H1 (cell line): ENCODE measurements at regions of chr11 and their contacts with region 1.

Region 1: DNA sequence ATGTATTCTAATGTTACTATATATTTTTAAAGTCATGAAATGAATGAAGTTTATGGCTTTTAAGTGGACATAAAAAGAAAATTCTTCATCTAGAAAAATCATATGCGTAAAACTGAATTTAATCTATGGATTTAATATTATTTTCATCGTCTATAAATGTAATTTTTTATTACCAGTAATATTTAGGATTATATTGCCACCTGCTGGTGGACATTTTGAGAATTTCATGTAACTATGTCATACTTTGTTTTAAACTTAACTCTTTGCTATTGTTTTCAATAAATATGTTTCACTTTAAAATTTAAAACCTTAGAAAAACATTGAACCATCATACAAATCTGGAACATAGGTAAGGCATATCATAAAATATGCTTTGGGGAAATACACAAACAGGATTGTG is 66.5 kb upstream of the CEP126 start:
- DNase-seq: no peak
- H3K4me3 ChIP-seq: no peak overlapping the region
- H3K27ac ChIP-seq: no peak overlapping the region
- H3K4me1 ChIP-seq: no peaks in the 10 kb centered on the region
- H3K27me3 ChIP-seq: no peaks in the 10 kb centered on the region
- CTCF ChIP-seq: no peak
- EP300 ChIP-seq: no peak
- POLR2A ChIP-seq: no peak
- RAD21 ChIP-seq: peak in 1 of 2 experiments; percentile 30; a peak in 3 of 4 replicates

Region 2: GRCh38 chr11:101428918-101429317 is 419.3 kb before region 1 on chr11:
- CTCF ChIA-PET with region 1: interaction called, 15 read pairs
- POLR2A ChIA-PET with region 1: no interaction called
- DNase-seq: no peak
- H3K4me3 ChIP-seq: no peak overlapping the region
- H3K27ac ChIP-seq: no peak overlapping the region
- H3K4me1 ChIP-seq: peaks cover 0 to 7% (median 0%) of the 10 kb centered on the region in 4 experiments; a peak in 2 of 7 replicates
- H3K27me3 ChIP-seq: no peaks in the 10 kb centered on the region
- CTCF ChIP-seq: peak in 2 of 3 experiments; percentile 68 to 72; a peak in 3 of 4 replicates
- EP300 ChIP-seq: no peak
- POLR2A ChIP-seq: no peak
- RAD21 ChIP-seq: peak; percentile 92 to 93

Region 3: GRCh38 chr11:101436511-101437142 is 411.6 kb before region 1 on chr11:
- CTCF ChIA-PET with region 1: interaction called, 38 read pairs
- POLR2A ChIA-PET with region 1: no interaction called
- DNase-seq: peak in 1 of 2 experiments; percentile 74
- H3K4me3 ChIP-seq: no peak overlapping the region
- H3K27ac ChIP-seq: no peak overlapping the region
- H3K4me1 ChIP-seq: no peaks in the 10 kb centered on the region
- H3K27me3 ChIP-seq: no peaks in the 10 kb centered on the region
- CTCF ChIP-seq: peak; percentile 8 to 84 (median 75)
- EP300 ChIP-seq: no peak
- POLR2A ChIP-seq: no peak
- RAD21 ChIP-seq: peak; percentile 86 to 92

Region 4: DNA sequence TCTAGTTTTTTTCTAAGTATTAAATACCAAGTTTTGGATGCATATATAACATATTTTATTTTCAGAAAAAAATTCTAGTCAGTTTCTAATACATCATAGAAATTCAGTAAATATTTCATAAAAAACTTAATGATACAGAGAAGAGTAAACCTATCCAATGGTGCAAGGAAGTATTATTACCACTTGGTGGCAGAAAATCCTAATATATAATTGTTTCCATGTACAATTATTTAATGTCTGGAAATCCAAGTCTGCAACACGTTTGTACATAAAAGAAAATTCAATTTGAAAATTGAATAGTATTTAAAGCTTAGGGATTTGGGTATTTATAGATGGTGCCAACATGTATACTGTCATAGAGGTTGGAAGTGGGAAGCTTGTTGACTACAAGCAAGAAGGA is 391.4 kb before region 1 on chr11:
- CTCF ChIA-PET with region 1: interaction called, 31 read pairs
- POLR2A ChIA-PET with region 1: no interaction called
- DNase-seq: no peak
- H3K4me3 ChIP-seq: no peak overlapping the region
- H3K27ac ChIP-seq: no peak overlapping the region
- H3K4me1 ChIP-seq: peaks cover 0 to 2% (median 0%) of the 10 kb centered on the region in 4 experiments; a peak in 1 of 7 replicates
- H3K27me3 ChIP-seq: no peaks in the 10 kb centered on the region
- CTCF ChIP-seq: no peak; a peak in 1 of 4 replicates
- EP300 ChIP-seq: no peak
- POLR2A ChIP-seq: no peak
- RAD21 ChIP-seq: peak in 1 of 2 experiments; percentile 38; a peak in 3 of 4 replicates

Region 5: DNA sequence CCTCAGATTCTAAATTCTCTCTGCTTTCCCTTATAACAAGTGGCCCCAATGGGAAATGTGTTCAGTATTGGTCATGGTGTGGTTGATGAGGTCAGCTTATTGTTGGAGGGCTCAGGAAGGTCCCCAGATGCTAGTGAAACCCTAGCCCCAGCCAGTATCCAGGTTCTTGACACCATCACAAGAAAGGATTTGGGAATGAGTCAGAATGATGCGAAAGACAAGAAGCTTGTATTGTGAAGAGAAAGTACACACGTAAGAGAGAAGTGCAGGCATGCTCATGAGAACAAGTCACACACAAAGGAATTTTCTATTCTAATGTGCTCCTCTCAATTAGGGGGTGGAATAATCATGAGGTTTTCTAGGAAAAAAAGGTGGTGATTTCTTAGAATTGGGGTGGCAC is 229.6 kb before region 1 on chr11:
- CTCF ChIA-PET with region 1: interaction called, 14 read pairs
- POLR2A ChIA-PET with region 1: no interaction called
- DNase-seq: no peak
- H3K4me3 ChIP-seq: no peak overlapping the region
- H3K27ac ChIP-seq: no peak overlapping the region
- H3K4me1 ChIP-seq: peaks cover 0 to 3% (median 0%) of the 10 kb centered on the region in 4 experiments; a peak in 1 of 7 replicates
- H3K27me3 ChIP-seq: peaks cover 0 to 1% (median 0%) of the 10 kb centered on the region in 4 experiments; a peak in 1 of 7 replicates
- CTCF ChIP-seq: no peak
- EP300 ChIP-seq: no peak
- POLR2A ChIP-seq: no peak
- RAD21 ChIP-seq: no peak

Region 6: DNA sequence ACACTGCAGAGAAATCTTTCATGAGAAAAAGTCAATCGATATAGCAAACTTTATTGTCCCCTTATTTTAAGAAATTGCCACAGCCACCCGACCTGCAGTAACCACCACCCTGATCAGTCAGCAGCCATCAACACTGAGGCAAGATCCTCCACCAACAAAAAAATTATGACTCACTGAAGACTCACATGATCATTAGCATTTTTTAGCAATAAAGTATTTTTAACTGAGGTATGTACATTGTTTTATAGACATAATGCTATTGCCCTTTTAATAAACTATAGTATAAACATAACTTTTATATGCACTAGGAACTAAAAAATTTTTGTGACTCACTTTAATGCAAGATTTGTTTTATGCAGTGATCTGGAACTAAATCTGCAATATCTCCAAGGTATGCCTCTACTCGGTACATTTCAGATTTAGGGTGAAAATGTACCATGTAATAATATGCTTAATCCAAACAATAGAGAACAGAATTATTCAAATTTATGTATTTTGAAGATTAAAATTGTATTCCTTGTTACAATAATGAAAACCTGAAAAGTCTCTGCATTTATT is 12.7 kb before region 1 on chr11:
- CTCF ChIA-PET with region 1: interaction called, 11 read pairs
- POLR2A ChIA-PET with region 1: no interaction called
- DNase-seq: no peak
- H3K4me3 ChIP-seq: no peak overlapping the region
- H3K27ac ChIP-seq: no peak overlapping the region
- H3K4me1 ChIP-seq: no peaks in the 10 kb centered on the region
- H3K27me3 ChIP-seq: no peaks in the 10 kb centered on the region
- CTCF ChIP-seq: no peak
- EP300 ChIP-seq: no peak
- POLR2A ChIP-seq: no peak
- RAD21 ChIP-seq: no peak

Region 7: DNA sequence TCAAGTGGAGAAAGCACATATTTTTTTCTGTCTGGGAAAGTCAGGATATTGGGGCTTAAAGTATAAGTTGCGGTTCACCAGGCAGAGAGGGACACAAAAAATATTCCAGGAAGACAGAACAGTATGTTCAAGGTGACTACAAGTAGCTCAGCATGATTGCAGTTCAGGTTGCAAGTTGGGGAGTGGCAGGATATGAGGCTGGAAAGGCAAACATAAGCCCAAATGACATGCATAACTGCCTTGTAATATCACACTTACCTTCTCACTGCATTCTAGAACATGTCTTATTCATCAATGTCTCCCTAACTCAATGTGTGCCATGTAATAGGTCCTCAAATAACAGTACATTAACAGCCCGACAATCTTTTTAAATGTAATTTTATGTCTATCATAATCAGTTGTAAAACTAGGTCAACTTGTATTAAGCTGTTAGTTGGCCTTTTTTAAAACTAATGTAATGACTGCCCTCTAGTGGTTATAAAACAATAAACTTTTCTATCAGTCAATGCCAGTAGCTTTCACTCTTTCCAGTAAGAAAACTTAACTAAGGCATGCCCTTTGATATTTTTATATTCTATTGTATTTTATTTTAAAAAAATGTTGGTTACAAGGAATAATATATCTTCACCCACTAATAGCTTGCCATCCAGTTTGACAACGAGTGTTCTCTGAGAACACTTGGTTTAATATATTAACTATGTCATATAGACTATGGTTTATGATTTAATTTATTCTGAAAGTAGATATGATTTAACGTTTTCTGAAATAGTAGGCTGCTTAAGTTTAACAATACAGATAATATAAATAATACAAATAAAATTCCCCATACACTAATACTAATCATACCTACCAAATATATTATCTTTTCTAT is 159.5 kb after region 1 on chr11:
- CTCF ChIA-PET with region 1: interaction called, 19 read pairs
- POLR2A ChIA-PET with region 1: no interaction called
- DNase-seq: no peak
- H3K4me3 ChIP-seq: no peak overlapping the region
- H3K27ac ChIP-seq: no peak overlapping the region
- H3K4me1 ChIP-seq: peaks cover 0 to 3% (median 0%) of the 10 kb centered on the region in 4 experiments; a peak in 1 of 7 replicates
- H3K27me3 ChIP-seq: no peaks in the 10 kb centered on the region
- CTCF ChIP-seq: peak in 2 of 3 experiments; percentile 23 to 29; a peak in 2 of 4 replicates
- EP300 ChIP-seq: no peak
- POLR2A ChIP-seq: no peak
- RAD21 ChIP-seq: peak in 1 of 2 experiments; percentile 56